ENCODE measurements at regions of chr6 and their contacts with region 1.

Region 1: GRCh38 chr6:45737331-45738056 is 278.2 kb downstream of the CLIC5 start:
- DNase-seq: peak; percentile 82
- H3K4me3 Mint-ChIP-seq: peak overlapping the region; percentile 68
- H3K27ac Mint-ChIP-seq: peak overlapping the region; percentile 85
- H3K4me1 Mint-ChIP-seq: peaks cover 53% of the 10 kb centered on the region
- H3K27me3 Mint-ChIP-seq: peaks cover 3% of the 10 kb centered on the region

Region 2: DNA sequence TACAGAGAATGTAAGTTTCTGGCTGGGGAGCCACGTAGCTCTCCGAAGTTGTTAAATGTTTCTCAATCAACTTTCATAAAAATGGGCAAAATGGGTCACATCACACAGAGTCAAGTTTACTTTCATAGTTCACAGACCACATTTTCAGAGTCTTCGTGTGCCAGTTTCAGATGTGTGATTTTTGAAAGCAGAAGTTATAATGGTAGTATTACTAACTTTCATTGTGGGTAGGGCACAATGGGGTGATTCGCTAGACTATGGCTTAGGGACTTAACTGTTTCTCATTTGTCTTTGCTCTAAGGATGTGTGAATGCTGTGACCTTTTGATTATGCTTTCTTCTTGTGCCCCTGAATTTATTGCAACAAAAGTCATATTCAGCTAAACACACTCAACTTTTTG is 250.8 kb before region 1 on chr6:
- intact Hi-C with region 1: loop called (anchors 5 kb)
- DNase-seq: no peak
- H3K4me3 Mint-ChIP-seq: no peak overlapping the region
- H3K27ac Mint-ChIP-seq: no peak overlapping the region
- H3K4me1 Mint-ChIP-seq: peaks cover 42% of the 10 kb centered on the region
- H3K27me3 Mint-ChIP-seq: no peaks in the 10 kb centered on the region

Region 3: GRCh38 chr6:45822246-45822812 is 84.8 kb after region 1 on chr6:
- intact Hi-C with region 1: loop called (anchors 2 kb)
- DNase-seq: no peak
- H3K4me3 Mint-ChIP-seq: peak overlapping the region; percentile 44
- H3K27ac Mint-ChIP-seq: peak overlapping the region; percentile 71
- H3K4me1 Mint-ChIP-seq: peaks cover 24% of the 10 kb centered on the region
- H3K27me3 Mint-ChIP-seq: no peaks in the 10 kb centered on the region

Region 4: DNA sequence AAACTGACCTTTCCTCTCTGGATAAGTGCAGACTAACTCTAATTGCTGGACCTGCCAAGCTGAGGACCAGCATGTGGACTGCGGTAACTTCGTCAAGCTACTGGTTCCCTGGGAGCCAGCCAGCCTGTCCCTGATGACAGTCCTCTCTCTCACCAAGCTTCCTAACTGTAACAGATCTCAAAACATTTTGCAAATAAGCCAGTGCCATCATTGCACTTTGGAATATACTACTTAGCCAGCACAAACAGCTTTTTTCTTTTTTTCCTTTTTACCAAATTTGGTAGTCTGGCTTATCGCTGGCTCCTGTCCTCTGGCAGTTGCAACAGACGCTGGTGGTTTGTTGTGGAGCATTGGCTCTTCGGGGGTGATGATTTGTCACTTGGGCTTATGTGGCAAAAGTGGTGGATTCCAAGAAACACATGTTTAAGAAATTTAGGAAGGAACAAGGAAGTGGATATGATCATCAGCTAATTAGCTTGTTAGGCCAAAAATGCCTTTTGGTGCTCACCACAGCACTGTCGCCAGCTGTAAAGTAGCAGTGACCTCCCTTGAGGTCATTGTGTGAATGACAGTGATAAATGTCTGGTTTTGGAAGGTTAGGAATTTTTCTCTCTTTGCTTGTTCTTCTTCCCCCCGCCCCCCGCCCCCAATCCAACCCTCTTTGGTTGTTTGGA is 106.5 kb after region 1 on chr6:
- intact Hi-C with region 1: no loop called
- DNase-seq: no peak
- H3K4me3 Mint-ChIP-seq: no peak overlapping the region
- H3K27ac Mint-ChIP-seq: no peak overlapping the region
- H3K4me1 Mint-ChIP-seq: no peaks in the 10 kb centered on the region
- H3K27me3 Mint-ChIP-seq: no peaks in the 10 kb centered on the region

Measured in activated CD4-positive, alpha-beta T cell treated with anti-CD3 and anti-CD28 coated beads, Interleukin-2, amount 10 ng/mL, durations not matched to agents 24 days and 14 days (primary cell).